OCI-LY7 (cell line): ENCODE measurements at regions of chr15 and their contacts with region 1.

Region 1: DNA sequence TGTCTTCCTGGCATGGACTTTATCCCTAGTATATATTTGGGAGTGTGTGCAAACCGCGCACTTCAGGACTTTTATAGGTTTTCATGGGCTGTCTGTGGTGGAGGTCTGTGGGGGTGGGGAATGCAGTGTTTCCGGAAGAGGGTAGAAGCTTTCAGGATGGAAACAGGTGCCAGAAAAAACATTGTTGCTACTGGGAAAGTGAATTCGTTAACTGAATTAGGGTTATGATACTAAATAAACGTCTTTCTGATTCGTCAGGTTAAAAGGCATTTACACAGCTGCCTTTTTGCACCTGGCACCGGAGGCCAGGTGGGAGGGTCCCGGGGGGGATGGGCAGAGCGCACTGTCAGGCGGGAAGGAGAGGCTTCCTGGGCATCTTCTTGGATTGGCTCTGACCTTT is 62.1 kb downstream of the SLCO3A1 start:
- DNase-seq: peak; percentile 82
- H3K4me3 ChIP-seq: peak overlapping the region; percentile 42
- H3K27ac ChIP-seq: peak overlapping the region; percentile 90
- H3K4me1 ChIP-seq: peaks cover 87% of the 10 kb centered on the region
- CTCF ChIP-seq: no peak

Region 2: GRCh38 chr15:91864664-91865063 is 50.9 kb before region 1 on chr15:
- CTCF ChIA-PET with region 1: no interaction called
- POLR2A ChIA-PET with region 1: no interaction called
- intact Hi-C with region 1: loop called (anchors 2 kb)
- DNase-seq: peak; percentile 90
- H3K4me3 ChIP-seq: no peak overlapping the region
- H3K27ac ChIP-seq: peak overlapping the region; percentile 39
- H3K4me1 ChIP-seq: peaks cover 83% of the 10 kb centered on the region
- CTCF ChIP-seq: no peak